H1 (cell line): ENCODE measurements at regions of chr13 and their contacts with region 1.

Region 1: GRCh38 chr13:113123226-113124201 is 915 bp downstream of the F10 start:
- DNase-seq: no peak
- H3K4me3 ChIP-seq: no peak overlapping the region
- H3K27ac ChIP-seq: no peak overlapping the region
- H3K4me1 ChIP-seq: peaks cover 0 to 10% (median 8%) of the 10 kb centered on the region in 4 experiments; a peak in 5 of 7 replicates
- H3K27me3 ChIP-seq: no peaks in the 10 kb centered on the region; a peak in 2 of 7 replicates
- CTCF ChIP-seq: peak in 2 of 3 experiments; percentile 41 to 52; a peak in 2 of 4 replicates
- EP300 ChIP-seq: no peak
- POLR2A ChIP-seq: no peak
- RAD21 ChIP-seq: peak; percentile 39 to 61; a peak in 3 of 4 replicates

Region 2: GRCh38 chr13:112990783-112991182 is 132.7 kb before region 1 on chr13:
- CTCF ChIA-PET with region 1: no interaction called
- POLR2A ChIA-PET with region 1: no interaction called
- DNase-seq: no peak
- H3K4me3 ChIP-seq: no peak overlapping the region
- H3K27ac ChIP-seq: no peak overlapping the region; the same call in 1 of the 2 replicates
- H3K4me1 ChIP-seq: peaks cover 0 to 2% (median under 1%) of the 10 kb centered on the region in 4 experiments; a peak in 4 of 7 replicates
- H3K27me3 ChIP-seq: no peaks in the 10 kb centered on the region
- CTCF ChIP-seq: no peak
- EP300 ChIP-seq: peak in 1 of 2 experiments; percentile 81; a peak in 1 of 3 replicates
- POLR2A ChIP-seq: 0 out of 3 replicates have a peak, but pooled peaks of 1 of the 2 experiments have one; percentile 35
- RAD21 ChIP-seq: no peak

Region 3: DNA sequence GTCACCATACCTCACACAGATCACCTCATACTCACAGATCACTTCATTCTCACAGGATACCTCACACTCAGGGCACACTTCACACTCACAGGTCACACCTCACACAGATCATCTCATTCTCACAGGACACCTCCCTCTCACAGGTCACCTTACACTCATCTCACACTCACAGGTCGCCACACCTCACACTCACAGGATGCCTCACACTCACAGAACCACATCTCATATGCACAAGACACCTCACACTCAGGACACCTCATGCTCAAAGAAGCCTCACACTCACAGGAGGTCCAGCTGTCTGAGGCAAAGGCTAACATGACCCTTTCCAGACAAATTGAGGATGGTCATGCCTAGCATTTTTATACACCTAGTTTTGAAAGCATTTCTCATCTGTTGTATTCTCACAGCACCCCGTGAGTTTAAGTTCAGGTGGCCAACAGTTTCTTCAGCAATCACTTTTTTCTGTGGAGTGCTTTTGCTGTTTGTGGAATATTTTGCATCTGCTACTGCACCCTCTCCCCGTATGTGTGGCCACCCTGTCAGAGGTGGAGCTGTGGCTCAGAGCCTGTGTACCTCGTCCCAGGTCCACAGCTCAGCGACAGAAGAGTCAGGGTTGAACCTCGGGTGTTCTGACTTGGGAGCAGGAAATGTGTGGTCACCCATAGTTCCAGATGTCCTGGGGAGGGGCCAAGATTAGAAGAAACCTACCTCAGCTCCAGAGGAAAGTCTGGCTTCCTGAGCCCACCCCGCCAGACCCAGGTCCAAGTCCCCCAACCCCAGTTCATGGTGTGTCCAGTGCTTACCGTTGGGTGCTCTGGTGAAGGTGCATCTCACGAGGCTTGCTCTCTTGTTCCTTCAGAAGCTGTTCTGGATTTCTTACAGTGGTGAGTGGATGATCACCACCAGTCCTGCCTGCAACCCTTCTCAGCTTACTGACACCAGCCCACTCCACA is 10.3 kb before region 1 on chr13:
- CTCF ChIA-PET with region 1: interaction called, 13 read pairs
- POLR2A ChIA-PET with region 1: interaction called, 6 read pairs
- DNase-seq: peak in 1 of 2 experiments; percentile 38
- H3K4me3 ChIP-seq: no peak overlapping the region
- H3K27ac ChIP-seq: no peak overlapping the region
- H3K4me1 ChIP-seq: peaks cover 0 to 3% (median 0%) of the 10 kb centered on the region in 4 experiments; a peak in 2 of 7 replicates
- H3K27me3 ChIP-seq: peaks cover 21 to 24% (median 23%) of the 10 kb centered on the region in 4 experiments; a peak in 6 of 7 replicates
- CTCF ChIP-seq: no peak
- EP300 ChIP-seq: no peak
- POLR2A ChIP-seq: no peak
- RAD21 ChIP-seq: no peak